Activated CD8-positive, alpha-beta T cell treated with anti-CD3 and anti-CD28 coated beads for 36 hours (primary cell): ENCODE measurements at regions of chrX and their contacts with region 1.

Region 1: GRCh38 chrX:153554519-153555167 is 37.2 kb downstream of the ATP2B3 start:
- DNase-seq: peak; percentile 74
- ATAC-seq: peak; percentile 70
- H3K4me3 Mint-ChIP-seq: no peak overlapping the region
- H3K27ac Mint-ChIP-seq: no peak overlapping the region
- H3K4me1 Mint-ChIP-seq: no peaks in the 10 kb centered on the region
- H3K27me3 Mint-ChIP-seq: no peaks in the 10 kb centered on the region
- CTCF ChIP-seq: peak; percentile 41

Region 2: DNA sequence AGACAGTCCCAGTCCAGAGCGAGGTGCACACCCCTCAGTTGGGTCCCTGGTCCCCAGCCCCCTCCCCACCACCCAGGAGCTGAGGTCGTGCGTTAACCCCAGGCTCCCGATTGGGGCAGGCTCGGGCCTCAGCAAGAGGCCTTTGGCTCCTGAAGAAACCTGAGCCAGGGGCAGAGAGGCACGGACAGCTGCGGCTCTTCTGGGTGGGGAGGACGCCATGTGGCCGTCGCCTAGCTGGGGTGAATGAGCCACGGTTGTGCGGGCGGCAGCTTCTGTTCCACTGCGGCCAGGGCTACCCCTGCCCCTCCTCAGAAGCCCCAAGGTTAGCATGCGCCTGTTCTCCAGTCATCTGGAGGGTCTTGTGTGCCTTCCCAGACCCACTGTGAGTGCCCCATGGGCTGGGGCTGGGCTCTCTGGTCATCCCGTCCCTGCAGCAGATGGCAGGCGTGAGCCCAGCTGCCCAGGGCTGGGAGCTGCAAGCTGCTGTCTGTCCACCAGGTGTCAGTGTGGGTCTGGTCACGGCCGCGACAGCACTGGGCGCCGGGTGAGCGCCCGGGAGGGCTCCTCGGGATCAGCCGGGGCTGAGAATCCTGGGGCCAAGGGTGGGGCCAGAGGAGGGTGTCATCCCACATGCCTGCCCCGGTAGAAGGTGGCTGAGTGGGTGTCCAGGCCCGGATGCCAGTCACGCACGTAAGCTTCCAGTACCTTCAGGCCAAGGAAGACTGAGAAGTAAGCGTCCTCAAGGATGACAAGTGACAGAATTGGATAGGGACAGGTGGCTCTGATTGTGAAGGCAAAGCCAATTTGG is 15.3 kb before region 1 on chrX:
- CTCF ChIA-PET with region 1: interaction called, 11 read pairs
- POLR2A ChIA-PET with region 1: no interaction called
- intact Hi-C with region 1: no loop called
- DNase-seq: peak; percentile 63
- ATAC-seq: peak; percentile 94
- H3K4me3 Mint-ChIP-seq: no peak overlapping the region
- H3K27ac Mint-ChIP-seq: no peak overlapping the region
- H3K4me1 Mint-ChIP-seq: no peaks in the 10 kb centered on the region
- H3K27me3 Mint-ChIP-seq: no peaks in the 10 kb centered on the region
- CTCF ChIP-seq: peak; percentile 63

Region 3: DNA sequence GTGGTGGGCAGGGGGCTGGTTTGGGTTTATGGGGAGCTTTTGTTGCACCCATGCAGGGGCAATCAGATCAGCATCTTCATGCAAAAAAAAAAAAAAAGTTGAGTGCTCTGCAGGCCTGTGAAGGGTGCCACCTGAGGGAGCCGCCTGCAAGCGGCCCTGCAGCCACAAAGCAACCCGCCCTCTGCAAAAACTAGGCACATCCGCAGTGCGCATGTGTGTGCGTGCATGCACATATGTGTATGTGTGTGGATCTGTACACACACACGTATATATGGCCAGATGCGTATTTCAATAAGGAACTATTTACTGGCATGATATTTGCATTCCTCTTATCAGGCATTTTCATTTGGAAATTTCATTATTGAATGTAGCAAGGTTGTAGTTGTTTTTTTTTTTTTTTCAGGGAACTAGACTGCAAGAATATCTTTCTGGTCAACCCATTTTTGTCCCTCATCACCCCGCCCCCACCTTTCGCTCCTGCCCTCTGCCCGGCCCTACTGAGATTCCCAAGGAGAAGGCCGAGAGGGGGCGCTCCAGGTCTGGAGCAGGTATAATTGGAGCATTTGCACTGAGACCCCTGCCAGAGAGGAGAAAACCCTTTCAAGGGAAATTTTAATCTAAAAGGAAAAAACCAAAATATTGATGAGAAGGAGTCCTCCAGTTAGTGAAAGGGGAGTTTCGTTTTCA is 26.2 kb after region 1 on chrX:
- CTCF ChIA-PET with region 1: no interaction called
- POLR2A ChIA-PET with region 1: no interaction called
- intact Hi-C with region 1: no loop called
- DNase-seq: no peak
- ATAC-seq: no peak
- H3K4me3 Mint-ChIP-seq: no peak overlapping the region
- H3K27ac Mint-ChIP-seq: no peak overlapping the region
- H3K4me1 Mint-ChIP-seq: peaks cover 16% of the 10 kb centered on the region
- H3K27me3 Mint-ChIP-seq: no peaks in the 10 kb centered on the region
- CTCF ChIP-seq: no peak